Ascending aorta (tissue), 2 donors: ENCODE measurements at regions of chr18 and their contacts with region 1.

Region 1: DNA sequence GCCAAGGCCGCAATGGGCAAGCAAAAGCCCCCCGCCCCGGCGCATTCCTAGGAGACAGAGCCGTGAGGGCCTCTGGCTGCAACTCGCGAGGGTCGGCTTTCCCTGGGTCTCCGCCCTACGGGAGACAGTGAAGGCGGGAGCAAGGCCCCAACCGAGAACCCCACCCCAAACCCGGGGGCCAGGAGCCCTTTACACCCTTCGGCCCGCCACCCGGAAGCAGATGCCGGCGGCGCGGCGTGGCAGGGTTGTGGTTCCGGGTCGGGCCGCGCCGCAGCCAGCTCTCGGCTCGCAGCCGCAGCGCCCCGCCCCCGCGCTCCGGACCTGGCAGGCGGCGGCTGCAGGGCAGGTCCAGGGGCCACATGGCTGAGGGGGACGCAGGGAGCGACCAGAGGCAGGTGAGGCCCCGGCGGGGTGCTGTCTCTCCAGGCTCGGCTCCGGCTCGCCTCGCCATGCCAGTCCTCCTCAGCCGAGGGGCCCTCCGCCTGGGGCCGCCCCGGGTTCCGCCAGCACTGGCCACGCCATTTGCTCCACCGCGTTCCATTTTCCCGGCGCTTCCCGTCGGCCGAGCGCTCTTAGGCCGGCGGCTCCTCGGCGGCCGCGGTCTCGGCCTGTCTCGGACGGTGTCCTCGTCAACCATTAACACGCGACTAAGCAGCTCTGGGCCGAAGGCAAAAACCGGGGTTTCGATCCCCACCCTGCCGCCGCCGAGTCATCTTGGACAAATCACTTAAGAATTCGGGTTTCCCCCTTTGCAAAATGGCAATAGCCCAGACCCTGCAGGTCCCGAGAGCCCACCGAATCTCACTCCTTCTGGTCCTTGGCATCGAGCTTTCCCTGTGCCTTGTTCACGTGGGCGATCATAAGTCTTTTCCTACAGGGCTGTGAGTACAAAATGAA is at the start of gene IMPACT:
- DNase-seq: peak; percentile 19 to 85
- H3K4me3 ChIP-seq: peak within 1 kb of the TSS; percentile 82 to 96
- H3K27ac ChIP-seq: peak within 1 kb of the TSS; percentile 78 to 79
- H3K4me1 ChIP-seq: peaks cover 6 to 7% of the 10 kb centered on the region in 2 donors
- H3K27me3 ChIP-seq: no peaks in the 10 kb centered on the region
- CTCF ChIP-seq: no peak
- total RNA-seq, gene IMPACT: 38.2 TPM

Region 2: GRCh38 chr18:24397694-24398365 is 28.8 kb before region 1 on chr18 and contains the start of gene OSBPL1A:
- intact Hi-C with region 1: loop called (anchors 1 kb)
- DNase-seq: peak; percentile 85 to 97
- H3K4me3 ChIP-seq: peak within 1 kb of the TSS; percentile 78 to 84
- H3K27ac ChIP-seq: peak within 1 kb of the TSS; percentile 84 to 90
- H3K4me1 ChIP-seq: no peaks in the 10 kb centered on the region
- H3K27me3 ChIP-seq: no peaks in the 10 kb centered on the region
- CTCF ChIP-seq: no peak
- total RNA-seq, gene OSBPL1A: 42.9 TPM

Region 3: DNA sequence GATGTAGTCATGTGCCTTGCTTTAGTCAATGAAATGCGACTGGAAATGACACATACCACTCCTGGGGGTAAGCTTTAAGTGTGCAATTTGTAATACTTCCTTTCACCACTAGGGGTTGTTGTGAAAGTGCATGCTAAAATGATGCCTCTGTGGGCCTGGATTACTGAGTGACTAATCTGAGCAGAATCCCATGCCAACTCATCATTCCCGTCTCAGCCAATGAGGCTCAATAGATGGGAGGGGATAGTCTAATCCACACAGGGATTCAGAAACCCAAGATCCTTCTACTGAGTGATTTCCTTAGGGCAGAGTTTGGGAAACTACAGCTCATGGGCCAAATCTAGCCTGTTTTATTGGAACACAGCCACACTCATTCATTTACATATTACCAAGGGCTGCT is 87.8 kb after region 1 on chr18:
- intact Hi-C with region 1: no loop called
- DNase-seq: no peak
- H3K4me3 ChIP-seq: no peak overlapping the region
- H3K27ac ChIP-seq: no peak overlapping the region
- H3K4me1 ChIP-seq: no peaks in the 10 kb centered on the region
- H3K27me3 ChIP-seq: no peaks in the 10 kb centered on the region
- CTCF ChIP-seq: peak in 1 of 3 experiments; percentile 17